ENCODE measurements at regions of chr5 and their contacts with region 1.

Region 1: GRCh38 chr5:172881691-172882370 is 47.8 kb downstream of the ERGIC1 start:
- DNase-seq: peak; percentile 71
- H3K4me3 Mint-ChIP-seq: no peak overlapping the region
- H3K27ac Mint-ChIP-seq: peak overlapping the region; percentile 76
- H3K4me1 Mint-ChIP-seq: peaks cover 35% of the 10 kb centered on the region
- H3K27me3 Mint-ChIP-seq: no peaks in the 10 kb centered on the region
- CTCF ChIP-seq: no peak

Region 2: GRCh38 chr5:172795318-172795977 is 86.4 kb before region 1 on chr5:
- CTCF ChIA-PET with region 1: no interaction called
- intact Hi-C with region 1: no loop called
- DNase-seq: no peak
- H3K4me3 Mint-ChIP-seq: no peak overlapping the region
- H3K27ac Mint-ChIP-seq: no peak overlapping the region
- H3K4me1 Mint-ChIP-seq: peaks cover 49% of the 10 kb centered on the region
- H3K27me3 Mint-ChIP-seq: no peaks in the 10 kb centered on the region
- CTCF ChIP-seq: no peak

Region 3: DNA sequence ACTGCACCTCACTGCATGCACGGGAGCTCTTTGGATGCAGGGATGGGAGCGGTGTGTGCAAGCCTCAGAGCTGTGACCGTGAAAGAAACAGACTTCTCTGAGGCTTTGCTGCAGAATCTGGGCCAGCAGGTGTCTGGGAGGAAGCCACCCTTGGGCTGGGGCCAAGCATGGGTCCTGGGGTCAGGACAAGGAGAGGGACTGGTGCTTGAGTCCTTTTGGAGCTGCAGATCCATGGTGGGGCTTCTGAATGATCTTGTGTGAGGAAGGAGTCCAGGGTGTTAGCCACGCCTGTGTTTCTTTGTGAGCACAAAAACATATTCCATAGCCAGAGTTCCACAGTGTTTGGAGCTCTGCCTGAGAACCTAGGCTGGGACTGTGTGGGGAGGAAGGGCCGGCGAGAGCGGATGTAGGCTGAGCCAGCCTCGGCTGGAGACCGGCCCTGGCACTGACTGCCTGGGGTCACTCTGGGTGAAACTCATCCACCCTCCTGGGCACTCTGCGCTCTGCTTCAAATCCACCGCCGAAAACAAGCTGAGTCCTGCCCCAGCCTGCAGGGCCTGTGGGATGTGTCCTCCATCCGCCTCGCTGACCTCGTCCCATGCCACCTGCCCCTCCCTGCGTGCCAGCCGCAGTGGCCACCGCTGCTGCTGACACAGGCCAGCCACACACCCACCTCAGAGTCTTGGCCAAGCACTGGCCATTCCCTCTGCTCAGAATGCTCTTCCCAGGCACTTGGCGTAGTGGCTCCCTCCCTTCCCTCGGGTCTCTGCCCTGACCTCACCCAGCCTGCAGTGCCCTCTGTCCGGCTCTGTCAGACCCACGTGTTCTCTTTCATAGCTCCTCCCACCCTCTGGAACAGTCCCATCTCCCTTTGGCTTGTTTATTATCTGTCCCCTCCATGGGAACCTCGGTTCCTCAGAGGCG is 21.0 kb before region 1 on chr5:
- CTCF ChIA-PET with region 1: interaction called, 10 read pairs
- intact Hi-C with region 1: no loop called
- DNase-seq: no peak
- H3K4me3 Mint-ChIP-seq: peak overlapping the region; percentile 21
- H3K27ac Mint-ChIP-seq: peak overlapping the region; percentile 69
- H3K4me1 Mint-ChIP-seq: peaks cover 63% of the 10 kb centered on the region
- H3K27me3 Mint-ChIP-seq: no peaks in the 10 kb centered on the region
- CTCF ChIP-seq: no peak

Measured in Calu3 (cell line).